Left ventricle myocardium superior (tissue), 1 donor: ENCODE measurements at regions of chr13 and their contacts with region 1.

Region 1: GRCh38 chr13:79423801-79424642 is 18.0 kb upstream of the RBM26 start:
- DNase-seq: no peak
- ATAC-seq: peak; percentile 30

Region 2: GRCh38 chr13:79360095-79360494 is 63.9 kb before region 1 on chr13:
- intact Hi-C with region 1: no loop called
- DNase-seq: no peak
- ATAC-seq: no peak

Region 3: DNA sequence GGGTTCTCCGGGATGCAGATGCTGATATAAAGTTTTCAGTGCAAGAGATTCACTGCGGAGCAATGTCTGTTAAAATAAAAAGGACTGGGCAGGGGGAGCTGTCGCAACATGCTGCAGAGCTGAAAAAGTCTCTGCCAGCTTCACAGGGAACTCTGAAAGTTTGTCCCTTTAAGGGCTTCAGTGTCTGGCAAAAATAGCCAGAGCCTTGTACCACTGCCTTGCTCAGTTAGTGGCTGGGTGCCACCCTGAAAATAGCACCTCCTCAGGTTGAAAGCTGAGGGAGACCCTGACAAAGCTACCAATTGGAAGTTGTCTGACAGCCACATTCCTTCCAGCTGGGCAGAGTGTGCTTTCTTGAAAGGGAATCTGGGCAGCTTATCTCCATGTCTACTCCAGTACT is 53.9 kb after region 1 on chr13:
- intact Hi-C with region 1: no loop called
- DNase-seq: peak; percentile 66
- ATAC-seq: peak; percentile 75

Region 4: DNA sequence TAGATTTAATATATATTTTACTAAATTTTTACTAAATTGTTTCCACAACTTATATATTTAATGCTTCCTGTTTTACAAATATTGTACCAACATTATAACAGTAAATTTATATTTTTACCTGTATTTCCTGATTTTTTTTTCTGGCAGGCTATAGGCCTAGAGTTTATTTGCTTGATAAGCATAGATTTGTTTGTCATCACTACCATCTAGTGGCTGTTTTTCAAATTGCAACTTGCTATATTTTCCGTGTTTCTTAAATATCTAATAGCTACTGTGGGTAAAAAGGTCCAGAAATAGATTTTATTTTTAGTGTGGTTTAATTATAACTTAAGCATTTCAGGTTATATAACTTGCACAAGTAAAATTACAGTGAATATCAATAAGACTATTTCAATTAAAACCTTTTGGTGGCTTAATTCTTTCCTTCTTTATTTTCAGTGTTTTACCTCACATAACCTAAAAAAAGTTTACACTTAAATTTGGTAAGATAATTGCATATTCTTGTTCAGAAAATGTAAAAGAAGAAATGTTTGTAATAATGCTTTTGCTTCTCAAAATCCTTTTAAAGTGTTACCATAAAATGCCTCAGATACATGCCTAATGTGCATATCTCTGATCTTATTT is 117.5 kb after region 1 on chr13:
- intact Hi-C with region 1: loop called (anchors 2 kb)
- DNase-seq: no peak
- ATAC-seq: peak; percentile 18

Region 5: GRCh38 chr13:79767126-79767525 is 343.1 kb after region 1 on chr13:
- intact Hi-C with region 1: no loop called
- DNase-seq: no peak
- ATAC-seq: no peak